HEK293T (cell line): ENCODE measurements at regions of chr7 and their contacts with region 1.

Region 1: DNA sequence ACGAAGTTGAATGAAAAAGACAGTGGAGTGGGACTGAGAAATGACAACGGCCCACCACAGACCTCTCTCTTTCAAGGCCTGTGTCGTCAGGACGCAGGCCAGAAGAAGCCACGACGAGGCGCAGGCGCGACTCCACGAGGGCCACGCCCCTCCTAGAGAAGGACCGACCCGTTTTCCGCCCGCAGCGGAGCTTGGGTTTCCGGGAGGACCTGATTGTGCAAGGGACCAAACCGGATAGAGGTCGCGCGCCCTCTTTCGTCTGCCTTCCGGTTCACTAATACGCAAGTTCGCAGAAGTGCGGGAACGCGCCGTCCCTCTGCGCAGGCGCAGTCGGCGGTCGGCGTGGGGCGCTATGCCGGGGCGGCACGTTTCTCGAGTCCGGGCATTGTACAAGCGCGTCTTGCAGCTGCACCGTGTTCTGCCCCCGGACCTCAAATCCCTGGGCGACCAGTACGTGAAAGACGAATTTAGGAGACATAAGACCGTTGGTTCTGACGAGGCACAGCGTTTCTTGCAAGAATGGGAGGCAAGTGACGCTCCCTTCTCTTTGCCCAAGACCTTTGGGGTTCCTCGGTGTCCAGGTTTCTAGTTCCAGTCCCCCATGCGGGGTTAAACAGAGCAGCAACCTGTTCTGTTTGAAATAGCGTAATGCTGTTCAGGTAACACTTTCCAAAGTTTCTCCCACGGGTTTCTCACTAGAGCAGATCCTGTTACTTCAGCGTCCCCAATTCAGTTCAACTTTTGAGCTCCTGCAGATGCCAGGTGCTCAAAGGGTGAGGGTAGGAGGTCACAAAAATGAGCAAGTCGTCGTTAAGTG is at the start of gene SDHAF3:
- DNase-seq: peak; percentile 95

Region 2: DNA sequence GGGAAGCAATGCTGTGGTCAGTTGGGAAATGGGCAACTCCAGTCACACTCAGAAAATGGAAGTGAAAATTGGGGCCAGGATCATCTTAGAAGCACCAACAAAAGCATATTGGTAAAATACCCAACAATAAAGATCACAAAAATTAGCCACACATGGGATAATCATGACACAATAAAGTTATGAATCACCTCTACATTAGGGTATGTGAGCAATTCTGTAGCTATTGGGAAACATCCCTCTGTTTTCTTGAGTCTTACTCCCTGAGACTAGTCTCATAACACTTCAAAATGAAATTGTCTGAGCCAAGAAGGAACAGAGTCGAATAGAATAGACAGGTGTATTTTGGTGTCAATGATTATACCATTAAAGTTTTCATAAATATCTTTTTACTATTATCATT is 1166.9 kb before region 1 on chr7:
- CTCF ChIA-PET with region 1: no interaction called
- POLR2A ChIA-PET with region 1: no interaction called
- DNase-seq: no peak

Region 3: DNA sequence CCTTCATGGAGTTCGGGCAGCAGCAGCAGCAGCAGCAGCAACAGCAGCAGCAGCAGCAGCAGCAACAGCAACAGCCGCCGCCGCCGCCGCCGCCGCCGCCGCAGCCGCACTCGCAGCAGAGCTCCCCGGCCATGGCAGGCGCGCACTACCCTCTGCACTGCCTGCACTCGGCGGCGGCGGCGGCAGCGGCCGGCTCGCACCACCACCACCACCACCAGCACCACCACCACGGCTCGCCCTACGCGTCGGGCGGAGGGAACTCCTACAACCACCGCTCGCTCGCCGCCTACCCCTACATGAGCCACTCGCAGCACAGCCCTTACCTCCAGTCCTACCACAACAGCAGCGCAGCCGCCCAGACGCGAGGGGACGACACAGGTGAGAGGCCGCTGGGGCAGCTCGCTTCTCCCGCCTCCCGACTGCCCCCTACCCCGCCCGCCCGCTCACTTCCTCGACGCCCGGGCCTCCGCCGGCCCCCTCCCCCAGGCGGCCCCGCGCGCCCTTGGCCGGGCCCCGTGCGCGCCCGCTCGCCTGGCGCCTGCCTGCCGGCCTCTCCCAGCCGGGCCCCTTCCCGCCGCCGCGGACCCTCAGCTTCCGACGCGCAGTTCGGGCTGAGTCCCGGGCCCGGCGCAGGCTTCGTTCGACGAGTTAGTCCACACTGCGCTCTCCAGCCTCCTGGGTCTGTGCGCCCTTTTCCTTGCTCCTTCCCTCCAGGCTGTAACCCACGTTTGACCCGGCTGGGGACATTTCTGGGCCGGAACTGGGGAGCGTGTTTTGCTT is 111.4 kb before region 1 on chr7:
- CTCF ChIA-PET with region 1: no interaction called
- POLR2A ChIA-PET with region 1: no interaction called
- DNase-seq: peak; percentile 66

Region 4: DNA sequence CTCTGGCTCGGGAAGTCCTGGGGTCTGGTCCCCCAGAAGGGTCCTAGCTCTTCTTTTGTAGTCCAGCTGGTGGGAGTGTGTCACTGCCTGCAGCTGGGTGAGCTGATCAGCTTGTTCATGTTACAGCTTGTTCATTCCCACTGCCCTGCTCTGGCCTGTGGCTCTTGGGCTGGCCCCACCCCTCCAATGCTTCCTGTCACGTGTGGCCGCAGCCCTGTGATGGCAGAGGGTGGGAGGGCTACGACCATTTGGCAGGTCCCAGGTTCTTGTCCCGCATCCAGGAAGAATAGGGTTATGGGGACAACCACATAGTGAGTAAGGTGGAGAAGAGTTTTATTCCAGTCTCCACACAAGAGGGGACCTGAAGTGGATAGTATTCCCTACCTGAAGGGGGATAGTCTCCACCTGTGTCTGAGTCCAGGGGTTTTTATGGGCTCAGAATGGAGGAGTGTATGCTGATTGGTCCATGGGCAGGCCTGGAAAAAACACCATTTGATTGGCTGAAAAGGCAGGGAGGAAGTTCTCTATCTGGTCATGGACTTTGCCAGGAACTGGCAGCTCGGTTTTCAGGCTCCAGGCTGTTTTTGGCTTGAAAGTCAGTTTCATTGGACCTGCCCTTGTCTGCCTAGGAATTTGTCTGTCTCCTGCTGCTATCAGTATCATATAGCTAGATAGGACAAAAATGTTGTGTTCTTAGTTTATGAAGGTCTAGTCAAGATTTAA is 13.0 kb after region 1 on chr7:
- CTCF ChIA-PET with region 1: no interaction called
- POLR2A ChIA-PET with region 1: interaction called, 12 read pairs
- DNase-seq: no peak